Heart left ventricle (tissue), 16 donors: ENCODE measurements at regions of chr5 and their contacts with region 1.

Region 1: DNA sequence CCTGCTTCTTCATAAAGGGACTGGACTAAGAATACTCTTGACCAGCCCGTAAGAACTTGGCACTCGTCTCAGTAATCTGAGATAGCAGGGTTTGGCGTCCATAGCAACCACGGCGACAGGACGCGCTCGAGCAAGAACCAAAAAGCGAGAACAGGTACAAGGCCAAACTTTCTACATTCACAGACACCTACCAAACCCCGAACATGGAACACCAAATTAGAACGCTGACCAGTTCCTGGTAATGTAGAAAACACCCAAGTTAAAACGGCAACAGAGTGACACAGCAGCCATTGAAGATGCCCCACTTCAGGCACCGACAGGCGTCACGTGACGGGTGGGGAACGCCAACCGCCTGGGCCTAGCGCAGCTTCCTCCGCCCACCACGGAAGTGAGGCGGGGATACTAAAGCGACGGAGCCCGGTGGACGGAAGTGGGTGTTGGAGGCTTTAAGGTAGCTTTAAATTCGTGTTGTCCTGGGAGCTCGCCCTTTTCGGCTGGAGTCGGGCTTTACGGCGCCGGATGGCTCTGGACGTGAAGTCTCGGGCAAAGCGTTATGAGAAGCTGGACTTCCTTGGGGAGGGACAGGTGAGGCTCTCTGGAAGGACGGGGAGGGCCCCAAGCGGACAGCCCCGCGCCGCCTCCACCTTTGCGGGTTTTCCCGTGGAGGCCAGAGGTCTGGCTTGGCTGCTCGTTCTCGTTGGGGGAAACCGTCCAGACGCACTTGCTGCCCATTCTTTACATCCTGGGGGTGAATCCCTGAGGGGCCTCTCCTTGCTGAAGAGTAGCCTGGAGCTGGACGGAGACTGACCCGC is at the start of gene CDK7:
- DNase-seq: peak; percentile 94 to 95 (median 95)
- ATAC-seq: peak; percentile 99 to 100 (median 100)
- H3K4me3 ChIP-seq: peak within 1 kb of the TSS; percentile 65 to 96 (median 88)
- H3K27ac ChIP-seq: peak within 1 kb of the TSS; percentile 35 to 91 (median 84)
- H3K4me1 ChIP-seq: peaks cover 3 to 27% (median 18%) of the 10 kb centered on the region in 12 donors
- H3K27me3 ChIP-seq: no peaks in the 10 kb centered on the region
- CTCF ChIP-seq: no peak
- POLR2A ChIP-seq: peak in 1 of 2 donors; percentile 65
- total RNA-seq, gene CDK7: 9.6 to 23.1 (median 14.5) TPM

Region 2: GRCh38 chr5:68968429-68968828 is 266.2 kb before region 1 on chr5:
- intact Hi-C with region 1: no loop called
- DNase-seq: no peak
- ATAC-seq: no peak
- H3K4me3 ChIP-seq: no peak overlapping the region
- H3K27ac ChIP-seq: no peak overlapping the region
- H3K4me1 ChIP-seq: no peaks in the 10 kb centered on the region
- H3K27me3 ChIP-seq: peaks cover 0 to 2% (median 0%) of the 10 kb centered on the region in 9 donors
- CTCF ChIP-seq: no peak
- POLR2A ChIP-seq: no peak

Region 3: DNA sequence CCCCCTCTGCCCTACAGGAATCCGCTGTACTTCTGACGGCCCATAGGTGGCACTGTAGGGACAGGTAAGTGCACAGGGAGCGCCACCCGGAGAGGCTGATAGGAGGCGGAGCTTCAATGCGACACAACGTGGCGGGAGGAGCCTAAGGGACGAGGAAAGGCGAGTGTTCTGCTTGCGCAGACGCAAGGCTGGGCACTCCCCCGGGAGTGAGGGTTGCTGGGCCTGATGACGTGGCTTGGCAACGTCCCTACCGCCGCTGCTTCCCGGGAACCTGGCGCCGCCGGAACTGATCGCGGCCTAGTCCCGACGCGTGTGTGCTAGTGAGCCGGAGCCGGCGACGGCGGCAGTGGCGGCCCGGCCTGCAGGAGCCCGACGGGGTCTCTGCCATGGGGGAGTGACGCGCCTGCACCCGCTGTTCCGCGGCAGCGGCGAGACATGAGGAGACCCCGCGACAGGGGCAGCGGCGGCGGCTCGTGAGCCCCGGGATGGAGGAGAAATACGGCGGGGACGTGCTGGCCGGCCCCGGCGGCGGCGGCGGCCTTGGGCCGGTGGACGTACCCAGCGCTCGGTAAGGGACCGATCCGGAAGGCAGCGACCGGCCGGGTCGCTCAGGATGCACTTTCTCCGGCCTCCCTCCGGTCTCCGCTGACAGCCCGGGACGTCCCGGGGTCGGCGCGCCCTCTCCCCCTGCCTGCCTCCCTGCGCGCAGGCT is 140.7 kb before region 1 on chr5 and contains the start of gene SLC30A5:
- intact Hi-C with region 1: loop called in 4 of 10 experiments (anchors 5 to 10 kb)
- DNase-seq: peak; percentile 99 to 100 (median 99)
- ATAC-seq: peak; percentile 99 to 100 (median 100)
- H3K4me3 ChIP-seq: peak within 1 kb of the TSS; percentile 73 to 98 (median 90)
- H3K27ac ChIP-seq: peak within 1 kb of the TSS; percentile 86 to 99 (median 96)
- H3K4me1 ChIP-seq: peaks cover 0 to 29% (median 15%) of the 10 kb centered on the region in 12 donors
- H3K27me3 ChIP-seq: no peaks in the 10 kb centered on the region
- CTCF ChIP-seq: peak; percentile 85 to 98 (median 92)
- POLR2A ChIP-seq: peak; percentile 58 to 94
- total RNA-seq, gene SLC30A5: 26.9 to 44.3 (median 30.0) TPM

Region 4: GRCh38 chr5:69099302-69099701 is 135.4 kb before region 1 on chr5:
- intact Hi-C with region 1: loop called in 4 of 10 experiments (anchors 5 to 10 kb)
- DNase-seq: no peak
- ATAC-seq: no peak
- H3K4me3 ChIP-seq: no peak overlapping the region
- H3K27ac ChIP-seq: no peak overlapping the region
- H3K4me1 ChIP-seq: peaks cover 0 to 28% (median 15%) of the 10 kb centered on the region in 12 donors
- H3K27me3 ChIP-seq: no peaks in the 10 kb centered on the region
- CTCF ChIP-seq: no peak
- POLR2A ChIP-seq: no peak

Region 5: DNA sequence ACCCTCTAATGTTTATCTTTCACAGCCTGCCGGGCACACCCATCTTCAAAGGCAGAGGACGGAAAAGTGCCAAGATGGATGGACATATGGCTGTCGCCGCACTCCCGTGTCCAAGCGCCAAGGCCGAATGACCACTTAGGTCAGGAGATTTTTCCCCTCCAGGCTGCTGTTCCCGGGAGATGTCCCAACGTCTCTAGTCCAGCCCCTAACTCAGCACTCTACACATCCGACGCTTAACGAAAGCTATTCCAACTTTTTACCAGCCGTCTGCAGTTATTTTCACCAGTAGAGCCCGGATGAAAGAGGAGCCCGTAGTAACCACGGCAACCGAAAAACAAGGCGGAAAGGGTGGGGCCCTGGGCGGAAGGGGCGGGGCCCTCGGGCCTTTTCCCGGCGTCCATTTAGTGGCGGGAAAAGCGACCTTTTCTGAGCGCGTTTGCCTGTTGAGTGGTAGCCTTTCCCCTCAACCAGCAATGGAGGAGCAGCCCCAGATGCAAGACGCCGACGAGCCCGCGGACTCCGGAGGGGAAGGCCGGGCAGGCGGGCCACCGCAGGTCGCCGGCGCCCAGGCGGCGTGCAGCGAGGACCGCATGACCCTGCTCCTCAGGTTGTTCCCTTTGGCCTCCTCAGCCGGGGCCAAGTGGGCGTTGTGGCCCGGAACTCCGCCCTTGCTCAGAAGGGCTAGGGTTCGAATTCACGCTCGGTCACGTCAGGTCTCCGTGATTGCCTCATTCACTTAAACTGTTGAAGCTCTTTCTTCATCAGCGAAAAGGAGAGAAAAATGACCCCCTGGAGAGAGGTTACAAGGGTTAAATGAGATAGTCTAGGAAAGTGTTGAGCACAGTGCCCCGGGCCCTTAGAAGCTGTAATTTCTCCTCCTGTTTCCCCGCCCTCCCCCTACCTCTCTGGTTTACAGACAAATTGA is 45.2 kb before region 1 on chr5 and contains the start of gene CENPH:
- intact Hi-C with region 1: loop called in 1 of 10 experiments (anchors 1 kb)
- DNase-seq: peak; percentile 87 to 91 (median 89)
- ATAC-seq: peak; percentile 97 to 100 (median 99)
- H3K4me3 ChIP-seq: peak within 1 kb of the TSS; percentile 58 to 95 (median 80)
- H3K27ac ChIP-seq: peak within 1 kb of the TSS in 11 of 12 donors; percentile 49 to 80 (median 68)
- H3K4me1 ChIP-seq: peaks cover 0 to 17% (median 10%) of the 10 kb centered on the region in 12 donors
- H3K27me3 ChIP-seq: no peaks in the 10 kb centered on the region
- CTCF ChIP-seq: no peak
- POLR2A ChIP-seq: peak in 1 of 2 donors; percentile 17
- total RNA-seq, gene CENPH: 1.1 to 6.9 (median 2.7) TPM

Region 6: GRCh38 chr5:69217548-69218526 is 16.8 kb before region 1 on chr5:
- intact Hi-C with region 1: loop called in 4 of 10 experiments (anchors 1 to 2 kb)
- DNase-seq: peak; percentile 98 to 99 (median 98)
- ATAC-seq: peak; percentile 98 to 99 (median 98)
- H3K4me3 ChIP-seq: peak overlapping the region; percentile 58 to 100 (median 94)
- H3K27ac ChIP-seq: peak overlapping the region; percentile 93 to 99 (median 98)
- H3K4me1 ChIP-seq: peaks cover 0 to 32% (median 12%) of the 10 kb centered on the region in 12 donors
- H3K27me3 ChIP-seq: no peaks in the 10 kb centered on the region
- CTCF ChIP-seq: peak in 10 of 12 donors; percentile 8 to 47 (median 32)
- POLR2A ChIP-seq: peak; percentile 88

Region 7: DNA sequence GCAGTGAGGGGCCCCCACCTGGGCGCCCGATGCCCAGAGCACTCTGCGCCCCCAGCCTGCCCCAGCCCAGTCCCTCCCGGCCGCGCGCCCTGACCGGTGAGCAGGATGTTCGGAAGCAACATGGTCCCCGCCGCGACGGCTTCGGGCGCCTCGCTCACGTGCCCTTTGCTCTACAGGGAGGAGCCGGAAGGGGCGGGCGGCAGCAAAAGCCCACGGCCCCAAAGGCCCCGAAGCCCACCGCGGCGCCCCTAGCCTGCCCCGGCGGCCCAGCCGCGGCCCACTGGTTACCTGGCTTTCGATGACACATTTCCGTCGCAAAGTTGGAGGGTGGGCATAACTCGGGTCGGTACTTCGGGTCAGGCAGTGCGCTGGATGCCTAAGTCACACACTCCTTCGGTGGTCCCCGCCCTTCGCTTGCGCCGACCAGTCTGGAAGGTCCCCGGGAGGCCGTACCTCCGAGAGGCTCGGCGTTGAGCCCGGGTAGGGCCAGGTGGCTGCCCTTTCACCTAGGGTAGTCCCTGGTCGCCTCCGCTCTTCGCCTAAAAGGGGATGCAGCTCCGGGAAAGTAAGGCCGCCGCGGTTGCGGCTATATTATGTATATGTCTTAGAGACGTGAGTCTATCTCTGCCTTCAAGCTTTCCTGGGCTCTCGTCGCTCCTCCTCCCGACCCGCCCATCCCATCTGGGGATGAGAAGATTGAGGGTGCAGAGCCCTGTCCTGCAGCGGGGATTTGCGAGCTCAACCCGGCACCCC is 134.9 kb after region 1 on chr5 and contains the starts of genes AK6, RAD17 and TAF9:
- intact Hi-C with region 1: loop called in 1 of 10 experiments (anchors 10 kb)
- DNase-seq: peak; percentile 92 to 96 (median 95)
- ATAC-seq: peak; percentile 97 to 99 (median 98)
- H3K4me3 ChIP-seq: peak within 1 kb of the TSS; percentile 54 to 94 (median 80)
- H3K27ac ChIP-seq: peak within 1 kb of the TSS; percentile 93 to 99 (median 98)
- H3K4me1 ChIP-seq: peaks cover 4 to 44% (median 25%) of the 10 kb centered on the region in 12 donors
- H3K27me3 ChIP-seq: no peaks in the 10 kb centered on the region
- CTCF ChIP-seq: peak in 1 of 12 donors; percentile 10
- POLR2A ChIP-seq: peak in 1 of 2 donors; percentile 66
- total RNA-seq, gene AK6: 26.2 to 43.8 (median 34.5) TPM
- total RNA-seq, gene RAD17: 17.4 to 25.8 (median 20.9) TPM
- total RNA-seq, gene TAF9: 37.8 to 51.9 (median 48.0) TPM